Panc1 (cell line): ENCODE measurements at regions of chr1 and their contacts with region 1.

Region 1: DNA sequence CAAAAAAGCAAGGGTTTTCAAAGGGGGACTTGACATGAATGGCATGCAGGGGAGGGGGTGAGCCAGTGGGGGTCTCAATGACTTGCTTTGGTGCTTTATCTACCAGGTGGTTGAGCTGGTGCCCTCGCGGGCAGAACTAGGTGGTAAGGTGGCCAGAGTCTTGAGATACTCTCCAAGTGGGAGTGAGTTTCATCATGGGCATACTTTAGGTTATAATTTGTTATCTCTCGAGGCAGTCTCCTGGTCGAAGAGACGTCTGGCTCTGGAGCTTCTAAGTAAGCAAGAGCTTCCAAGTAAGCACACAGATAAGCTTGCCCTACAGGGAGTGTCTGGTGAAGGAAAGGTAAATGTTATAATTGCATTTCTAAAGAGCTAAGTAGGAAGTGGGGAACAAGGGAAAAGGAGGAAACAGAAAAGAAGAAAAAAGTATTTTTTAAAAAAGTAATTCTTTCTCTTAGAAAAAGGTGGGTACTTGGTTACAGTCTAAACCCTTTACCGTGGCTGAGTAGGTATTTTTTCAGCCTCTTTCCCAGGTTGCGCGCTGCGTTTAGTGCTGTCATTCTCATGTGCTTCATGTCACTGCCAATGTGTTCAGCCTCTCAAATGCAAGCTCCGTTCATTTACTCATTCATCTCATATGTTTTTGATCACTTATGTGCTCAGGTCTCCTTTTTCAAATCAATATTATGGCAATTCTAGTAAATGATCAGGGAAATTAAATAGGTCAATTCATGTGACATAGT is 31.6 kb upstream of the DNAJC6 start:
- DNase-seq: no peak
- ATAC-seq: no peak
- H3K4me3 ChIP-seq: no peak overlapping the region
- H3K27ac ChIP-seq: no peak overlapping the region
- H3K4me1 ChIP-seq: 0 out of 2 replicates have a peak, but pooled peaks cover 4% of the 10 kb centered on the region
- H3K27me3 ChIP-seq: no peaks in the 10 kb centered on the region
- CTCF ChIP-seq: no peak

Region 2: GRCh38 chr1:64062941-64063581 is 1214.7 kb before region 1 on chr1:
- CTCF ChIA-PET with region 1: no interaction called
- POLR2A ChIA-PET with region 1: no interaction called
- in situ Hi-C with region 1: no loop called
- intact Hi-C with region 1: no loop called
- DNase-seq: no peak
- ATAC-seq: no peak
- H3K4me3 ChIP-seq: no peak overlapping the region
- H3K27ac ChIP-seq: no peak overlapping the region
- H3K4me1 ChIP-seq: peaks cover 5% of the 10 kb centered on the region; the same call in 1 of the 2 replicates
- H3K27me3 ChIP-seq: no peaks in the 10 kb centered on the region
- CTCF ChIP-seq: no peak

Region 3: DNA sequence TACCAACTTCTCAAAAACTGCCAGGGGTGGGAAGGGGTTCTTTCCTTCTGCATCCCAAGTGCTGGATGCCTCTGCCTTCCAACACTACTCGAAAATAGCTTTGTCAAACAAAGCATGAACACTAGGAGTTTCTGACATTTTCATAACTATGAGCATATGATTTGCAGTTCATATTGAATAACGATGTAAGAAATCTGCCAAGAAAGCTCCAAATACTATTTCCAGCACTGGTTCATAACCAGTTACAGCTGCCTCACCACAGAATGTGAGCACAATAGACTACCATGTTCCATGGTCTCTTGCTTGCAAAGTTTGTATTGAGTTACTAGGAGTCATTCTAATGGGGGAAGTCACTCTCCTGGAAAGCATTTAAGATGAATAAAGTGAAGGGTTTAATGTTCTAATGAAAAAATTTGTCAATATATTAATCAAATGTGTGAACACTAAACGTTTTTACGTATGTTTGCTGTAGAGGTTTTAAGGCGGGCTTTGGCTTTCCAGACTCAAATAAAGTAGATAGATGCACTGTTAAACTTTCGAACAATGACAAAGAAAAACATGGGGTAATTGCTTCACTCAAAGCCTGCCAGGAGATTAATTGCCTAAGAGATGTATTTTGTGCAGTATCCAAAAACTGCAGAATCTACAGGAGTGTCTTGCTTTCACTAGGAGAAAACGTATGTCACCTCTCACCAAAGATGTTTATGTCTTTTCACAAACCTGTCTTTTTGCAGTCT is 1152.9 kb before region 1 on chr1:
- CTCF ChIA-PET with region 1: interaction called, 12 read pairs
- POLR2A ChIA-PET with region 1: no interaction called
- in situ Hi-C with region 1: no loop called
- intact Hi-C with region 1: no loop called
- DNase-seq: no peak
- ATAC-seq: no peak
- H3K4me3 ChIP-seq: no peak overlapping the region
- H3K27ac ChIP-seq: no peak overlapping the region
- H3K4me1 ChIP-seq: no peaks in the 10 kb centered on the region
- H3K27me3 ChIP-seq: no peaks in the 10 kb centered on the region
- CTCF ChIP-seq: no peak